Calu3 (cell line): ENCODE measurements at regions of chr1 and their contacts with region 1.

Region 1: GRCh38 chr1:95742591-95743089 is 508.6 kb downstream of the RWDD3 start:
- DNase-seq: peak; percentile 71
- H3K4me3 Mint-ChIP-seq: peak overlapping the region; percentile 59
- H3K27ac Mint-ChIP-seq: peak overlapping the region; percentile 87
- H3K4me1 Mint-ChIP-seq: peaks cover 35% of the 10 kb centered on the region
- H3K27me3 Mint-ChIP-seq: no peaks in the 10 kb centered on the region
- CTCF ChIP-seq: no peak

Region 2: GRCh38 chr1:95475686-95476457 is 266.8 kb before region 1 on chr1:
- CTCF ChIA-PET with region 1: no interaction called
- intact Hi-C with region 1: loop called (anchors 5 kb)
- DNase-seq: peak; percentile 50
- H3K4me3 Mint-ChIP-seq: no peak overlapping the region
- H3K27ac Mint-ChIP-seq: peak overlapping the region; percentile 86
- H3K4me1 Mint-ChIP-seq: peaks cover 59% of the 10 kb centered on the region
- H3K27me3 Mint-ChIP-seq: no peaks in the 10 kb centered on the region
- CTCF ChIP-seq: no peak

Region 3: GRCh38 chr1:95558791-95559190 is 183.8 kb before region 1 on chr1:
- CTCF ChIA-PET with region 1: no interaction called
- intact Hi-C with region 1: loop called (anchors 10 kb)
- DNase-seq: no peak
- H3K4me3 Mint-ChIP-seq: no peak overlapping the region
- H3K27ac Mint-ChIP-seq: no peak overlapping the region
- H3K4me1 Mint-ChIP-seq: peaks cover 10% of the 10 kb centered on the region
- H3K27me3 Mint-ChIP-seq: no peaks in the 10 kb centered on the region
- CTCF ChIP-seq: no peak

Region 4: DNA sequence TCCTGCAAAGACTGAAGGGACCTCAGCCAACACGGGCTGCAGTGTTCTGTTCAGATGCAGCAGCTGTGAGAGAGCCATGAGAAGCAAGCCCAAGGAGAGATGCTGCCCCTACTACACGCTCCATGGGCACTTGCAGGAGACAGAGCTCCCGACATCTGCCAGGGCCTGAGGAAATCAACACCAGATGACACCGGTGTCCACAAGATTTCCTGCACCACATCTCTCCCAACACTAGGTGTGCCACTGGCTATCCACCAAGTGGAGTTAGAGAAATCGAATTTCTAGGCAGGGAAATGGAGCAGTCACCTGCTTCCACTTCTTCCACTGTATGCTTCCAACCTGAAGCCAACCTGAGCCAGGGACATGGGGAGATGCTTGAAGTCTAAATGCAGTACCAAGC is 63.4 kb before region 1 on chr1:
- CTCF ChIA-PET with region 1: no interaction called
- intact Hi-C with region 1: no loop called
- DNase-seq: no peak
- H3K4me3 Mint-ChIP-seq: no peak overlapping the region
- H3K27ac Mint-ChIP-seq: no peak overlapping the region
- H3K4me1 Mint-ChIP-seq: no peaks in the 10 kb centered on the region
- H3K27me3 Mint-ChIP-seq: no peaks in the 10 kb centered on the region
- CTCF ChIP-seq: no peak

Region 5: DNA sequence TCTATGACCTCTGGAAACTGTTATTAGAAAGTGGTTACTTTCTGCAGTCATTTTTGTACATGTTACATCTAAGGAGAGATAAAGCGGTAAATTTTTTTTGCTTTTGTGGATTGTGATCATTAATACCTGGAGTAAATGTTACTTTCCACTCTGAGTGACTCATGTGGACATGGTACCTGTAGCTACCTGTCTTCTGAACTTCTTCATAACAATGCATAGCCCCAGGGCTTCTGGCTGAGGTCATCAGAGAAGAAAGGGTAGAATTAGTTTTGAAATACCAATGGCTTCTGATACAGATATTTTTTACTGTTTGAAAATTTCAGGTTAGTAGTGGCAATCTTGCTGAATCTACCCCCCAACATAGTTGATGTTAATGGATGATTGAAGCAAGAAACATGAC is 19.3 kb before region 1 on chr1:
- CTCF ChIA-PET with region 1: no interaction called
- intact Hi-C with region 1: no loop called
- DNase-seq: no peak
- H3K4me3 Mint-ChIP-seq: no peak overlapping the region
- H3K27ac Mint-ChIP-seq: no peak overlapping the region
- H3K4me1 Mint-ChIP-seq: no peaks in the 10 kb centered on the region
- H3K27me3 Mint-ChIP-seq: no peaks in the 10 kb centered on the region
- CTCF ChIP-seq: no peak

Region 6: GRCh38 chr1:95752515-95753381 is 10.1 kb after region 1 on chr1:
- CTCF ChIA-PET with region 1: no interaction called
- intact Hi-C with region 1: no loop called
- DNase-seq: no peak
- H3K4me3 Mint-ChIP-seq: no peak overlapping the region
- H3K27ac Mint-ChIP-seq: no peak overlapping the region
- H3K4me1 Mint-ChIP-seq: no peaks in the 10 kb centered on the region
- H3K27me3 Mint-ChIP-seq: no peaks in the 10 kb centered on the region
- CTCF ChIP-seq: no peak

Region 7: GRCh38 chr1:95916616-95917015 is 174.0 kb after region 1 on chr1:
- CTCF ChIA-PET with region 1: no interaction called
- intact Hi-C with region 1: loop called (anchors 5 kb)
- DNase-seq: peak; percentile 5
- H3K4me3 Mint-ChIP-seq: no peak overlapping the region
- H3K27ac Mint-ChIP-seq: no peak overlapping the region
- H3K4me1 Mint-ChIP-seq: peaks cover 22% of the 10 kb centered on the region
- H3K27me3 Mint-ChIP-seq: no peaks in the 10 kb centered on the region
- CTCF ChIP-seq: no peak

Region 8: GRCh38 chr1:96191165-96191564 is 448.5 kb after region 1 on chr1:
- CTCF ChIA-PET with region 1: no interaction called
- intact Hi-C with region 1: no loop called
- DNase-seq: no peak
- H3K4me3 Mint-ChIP-seq: no peak overlapping the region
- H3K27ac Mint-ChIP-seq: no peak overlapping the region
- H3K4me1 Mint-ChIP-seq: no peaks in the 10 kb centered on the region
- H3K27me3 Mint-ChIP-seq: no peaks in the 10 kb centered on the region
- CTCF ChIP-seq: no peak